Mammary epithelial cell (primary cell): ENCODE measurements at regions of chr6 and their contacts with region 1.

Region 1: GRCh38 chr6:127690092-127690491 is 113.1 kb downstream of the C6orf58 start:
- DNase-seq: peak; percentile 1
- H3K4me3 ChIP-seq: no peak overlapping the region
- H3K27ac ChIP-seq: no peak overlapping the region
- H3K4me1 ChIP-seq: no peaks in the 10 kb centered on the region
- H3K27me3 ChIP-seq: peaks cover 5% of the 10 kb centered on the region
- CTCF ChIP-seq: peak; percentile 74 to 76

Region 2: GRCh38 chr6:127554435-127555006 is 135.6 kb before region 1 on chr6:
- CTCF ChIA-PET with region 1: no interaction called
- dilution Hi-C with region 1: no loop called
- in situ Hi-C with region 1: no loop called
- intact Hi-C with region 1: loop called (anchors 1 kb)
- DNase-seq: peak; percentile 41
- H3K4me3 ChIP-seq: no peak overlapping the region
- H3K27ac ChIP-seq: no peak overlapping the region
- H3K4me1 ChIP-seq: no peaks in the 10 kb centered on the region
- H3K27me3 ChIP-seq: peaks cover 3% of the 10 kb centered on the region
- CTCF ChIP-seq: peak; percentile 60 to 73